HCT116 (cell line): ENCODE measurements at regions of chr14 and their contacts with region 1.

Region 1: DNA sequence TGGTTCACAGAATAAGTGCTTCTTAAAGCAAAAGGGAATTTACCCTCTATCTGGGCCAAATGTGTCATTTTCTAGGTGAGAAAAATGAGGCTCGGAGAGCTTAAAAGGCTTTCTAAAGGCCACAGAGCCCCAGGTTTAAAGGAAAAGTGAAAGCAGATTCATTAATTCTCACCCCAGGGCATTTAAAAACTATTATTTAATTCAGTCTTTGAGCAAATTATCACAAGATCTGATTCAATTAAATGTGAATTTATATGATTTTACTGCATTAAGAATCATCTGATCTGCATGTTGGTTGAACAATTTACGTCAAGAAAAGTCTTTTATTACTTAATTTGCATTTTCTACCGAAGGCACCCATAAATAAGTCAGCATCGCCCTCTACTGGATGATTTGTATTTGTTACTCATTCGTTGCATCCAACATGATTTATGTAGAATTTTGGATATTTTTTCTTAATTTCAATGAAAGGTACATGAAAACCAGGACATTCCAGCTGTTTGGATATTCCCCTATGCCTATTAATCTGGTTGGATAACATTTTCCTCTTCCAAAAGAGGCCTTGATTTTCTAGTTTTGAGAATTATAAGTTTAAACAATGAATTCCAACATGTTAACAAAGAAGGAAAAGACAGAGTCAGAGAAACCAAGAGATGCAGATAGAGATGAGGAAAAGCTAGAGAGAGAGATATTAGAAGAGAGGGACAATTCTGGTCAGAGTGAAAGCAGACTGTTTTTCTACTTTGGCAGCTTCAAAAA is 19.1 kb upstream of the DHRS7 start:
- DNase-seq: peak; percentile 61
- ATAC-seq: peak; percentile 64
- H3K4me3 ChIP-seq: peak overlapping the region; percentile 28 to 36
- H3K27ac ChIP-seq: no peak overlapping the region
- H3K4me1 ChIP-seq: peaks cover 0 to 12% of the 10 kb centered on the region in 2 experiments; a peak in 2 of 4 replicates
- H3K27me3 ChIP-seq: no peaks in the 10 kb centered on the region
- CTCF ChIP-seq: peak; percentile 46 to 84 (median 83); a peak in 5 of 6 replicates
- POLR2A ChIP-seq: no peak
- RAD21 ChIP-seq: peak; percentile 92

Region 2: GRCh38 chr14:59507063-59507780 is 677.1 kb before region 1 on chr14:
- CTCF ChIA-PET with region 1: interaction called, 8 read pairs
- POLR2A ChIA-PET with region 1: no interaction called
- RAD21 ChIA-PET with region 1: no interaction called
- intact Hi-C with region 1: loop called (anchors 5 kb)
- DNase-seq: peak; percentile 42
- ATAC-seq: peak; percentile 96
- H3K4me3 ChIP-seq: no peak overlapping the region
- H3K27ac ChIP-seq: no peak overlapping the region
- H3K4me1 ChIP-seq: no peaks in the 10 kb centered on the region
- H3K27me3 ChIP-seq: no peaks in the 10 kb centered on the region
- CTCF ChIP-seq: peak; percentile 62 to 99 (median 94)
- POLR2A ChIP-seq: no peak
- RAD21 ChIP-seq: peak; percentile 61

Region 3: GRCh38 chr14:59632381-59632780 is 551.9 kb before region 1 on chr14:
- CTCF ChIA-PET with region 1: interaction called, 10 read pairs
- POLR2A ChIA-PET with region 1: no interaction called
- RAD21 ChIA-PET with region 1: no interaction called
- intact Hi-C with region 1: loop called (anchors 1 kb)
- DNase-seq: peak; percentile 33
- ATAC-seq: peak; percentile 80
- H3K4me3 ChIP-seq: no peak overlapping the region
- H3K27ac ChIP-seq: no peak overlapping the region
- H3K4me1 ChIP-seq: no peaks in the 10 kb centered on the region
- H3K27me3 ChIP-seq: no peaks in the 10 kb centered on the region
- CTCF ChIP-seq: peak; percentile 69 to 75 (median 71)
- POLR2A ChIP-seq: no peak
- RAD21 ChIP-seq: peak; percentile 70

Region 4: DNA sequence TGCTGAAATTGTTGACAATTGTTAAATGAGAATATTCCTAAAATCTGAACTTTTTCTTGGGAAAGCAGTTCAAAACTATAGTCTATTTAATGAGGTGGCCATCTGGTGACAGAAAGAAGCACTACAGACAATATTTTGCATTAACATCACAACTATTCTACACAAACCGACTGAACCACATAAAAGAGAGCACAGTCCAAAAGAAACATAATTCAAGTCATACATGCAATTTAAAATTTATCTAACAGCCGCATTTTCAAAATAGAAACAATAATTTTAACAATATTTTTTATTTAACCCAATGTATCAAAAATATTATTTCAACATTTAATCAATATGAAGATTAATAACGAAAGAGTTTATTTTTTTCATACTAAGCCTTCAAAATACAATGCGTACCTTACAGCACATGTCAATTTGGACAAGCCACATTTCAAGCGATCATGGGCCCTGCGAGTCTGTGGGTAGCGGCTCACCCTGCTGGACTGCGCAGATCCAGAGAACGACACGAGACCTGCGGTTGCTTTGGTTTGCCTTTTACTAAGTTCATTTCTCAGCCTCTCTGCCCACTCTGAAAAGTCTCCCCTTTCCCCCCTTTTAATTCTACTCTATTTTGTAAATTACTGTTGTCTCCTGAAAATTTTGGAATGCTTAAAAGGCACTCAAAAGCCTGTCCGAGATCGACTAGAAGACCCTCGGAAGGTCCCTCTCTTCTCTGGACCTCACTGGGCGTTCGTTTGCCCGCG is 265.3 kb before region 1 on chr14:
- CTCF ChIA-PET with region 1: interaction called, 3 read pairs
- POLR2A ChIA-PET with region 1: no interaction called
- RAD21 ChIA-PET with region 1: no interaction called
- intact Hi-C with region 1: loop called (anchors 2 kb)
- DNase-seq: peak; percentile 16
- ATAC-seq: no peak; the same call in 1 of the 2 replicates
- H3K4me3 ChIP-seq: no peak overlapping the region
- H3K27ac ChIP-seq: no peak overlapping the region
- H3K4me1 ChIP-seq: no peaks in the 10 kb centered on the region
- H3K27me3 ChIP-seq: no peaks in the 10 kb centered on the region
- CTCF ChIP-seq: peak; percentile 34 to 55 (median 37); a peak in 4 of 6 replicates
- POLR2A ChIP-seq: no peak
- RAD21 ChIP-seq: peak; percentile 45

Region 5: DNA sequence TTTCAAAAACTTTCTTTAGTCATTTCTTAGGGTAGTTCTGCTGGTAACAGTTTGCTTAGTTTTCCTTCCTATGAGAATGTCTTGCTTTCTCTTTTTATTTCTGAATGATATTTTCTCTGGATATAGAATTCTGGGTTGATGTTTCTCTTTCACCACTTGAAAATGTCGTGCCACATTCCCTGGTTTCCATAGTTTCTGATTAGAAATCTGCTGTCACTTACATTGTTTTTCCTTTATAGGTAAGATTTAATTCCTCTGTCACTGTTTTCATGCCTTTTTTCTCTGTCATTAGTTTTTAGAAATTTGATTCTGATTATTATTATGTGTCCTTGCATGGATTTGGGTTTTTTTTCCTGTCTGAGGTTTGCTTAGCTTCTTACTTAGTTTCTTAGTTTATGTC is 169.9 kb before region 1 on chr14:
- CTCF ChIA-PET with region 1: no interaction called
- POLR2A ChIA-PET with region 1: no interaction called
- RAD21 ChIA-PET with region 1: no interaction called
- intact Hi-C with region 1: no loop called
- DNase-seq: no peak
- ATAC-seq: no peak
- H3K4me3 ChIP-seq: no peak overlapping the region
- H3K27ac ChIP-seq: no peak overlapping the region
- H3K4me1 ChIP-seq: no peaks in the 10 kb centered on the region
- H3K27me3 ChIP-seq: no peaks in the 10 kb centered on the region
- CTCF ChIP-seq: no peak
- POLR2A ChIP-seq: no peak
- RAD21 ChIP-seq: no peak

Region 6: GRCh38 chr14:60064491-60065072 is 119.7 kb before region 1 on chr14:
- CTCF ChIA-PET with region 1: interaction called, 50 read pairs
- POLR2A ChIA-PET with region 1: no interaction called
- RAD21 ChIA-PET with region 1: no interaction called
- intact Hi-C with region 1: loop called (anchors 1 kb)
- DNase-seq: peak; percentile 12
- ATAC-seq: no peak; the same call in 1 of the 2 replicates
- H3K4me3 ChIP-seq: no peak overlapping the region
- H3K27ac ChIP-seq: no peak overlapping the region
- H3K4me1 ChIP-seq: peaks cover 4 to 10% of the 10 kb centered on the region in 2 experiments; a peak in 2 of 4 replicates
- H3K27me3 ChIP-seq: no peaks in the 10 kb centered on the region
- CTCF ChIP-seq: peak; percentile 27 to 67 (median 46); a peak in 4 of 6 replicates
- POLR2A ChIP-seq: no peak
- RAD21 ChIP-seq: peak; percentile 74

Region 7: DNA sequence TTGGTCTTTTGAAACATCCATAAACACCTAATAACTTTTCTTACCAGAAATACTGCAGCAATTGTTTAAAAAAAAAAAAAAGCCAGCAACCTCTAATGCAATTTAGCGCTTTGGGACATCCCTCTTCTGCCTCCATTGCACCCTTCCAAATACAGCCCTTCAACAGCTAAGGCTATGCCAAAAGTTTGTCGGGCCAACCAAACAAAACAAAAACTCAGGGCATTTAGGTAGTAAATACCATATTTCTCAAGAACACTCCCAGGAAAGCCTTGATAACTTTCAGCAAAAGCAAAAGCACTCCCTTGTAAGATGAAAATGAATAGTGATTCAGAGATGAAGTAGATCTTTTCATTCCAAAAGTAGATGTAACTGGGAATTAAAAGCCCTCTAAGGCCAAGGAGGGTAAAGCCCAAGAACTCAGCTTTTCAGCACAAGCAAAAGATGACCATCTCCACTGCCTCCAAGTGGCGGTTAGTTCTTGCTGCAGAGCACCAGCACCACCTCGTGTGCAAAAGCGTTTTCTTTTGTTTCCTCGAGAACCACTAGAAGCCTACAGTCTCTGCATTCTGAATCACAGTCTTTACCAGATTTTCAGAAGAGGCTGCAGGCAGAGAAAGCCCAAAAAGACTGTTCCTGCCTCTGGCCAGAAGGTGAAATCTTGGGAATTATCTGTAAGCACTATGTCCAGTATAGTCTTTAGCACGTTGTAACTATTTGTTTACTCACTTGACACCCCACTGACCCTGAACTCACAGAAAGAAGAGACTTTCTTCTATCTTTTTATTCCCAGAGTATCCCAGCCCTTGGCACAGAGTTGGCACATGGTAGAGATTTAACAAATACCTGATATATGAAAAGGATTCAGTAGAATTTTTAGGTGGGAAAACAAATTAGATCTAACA is 377.8 kb after region 1 on chr14:
- CTCF ChIA-PET with region 1: interaction called, 13 read pairs
- POLR2A ChIA-PET with region 1: no interaction called
- RAD21 ChIA-PET with region 1: interaction called in 1 of 2 experiments, 3 read pairs
- intact Hi-C with region 1: loop called (anchors 2 kb)
- DNase-seq: peak; percentile 81
- ATAC-seq: peak; percentile 97
- H3K4me3 ChIP-seq: no peak overlapping the region
- H3K27ac ChIP-seq: no peak overlapping the region
- H3K4me1 ChIP-seq: peaks cover 0 to 4% of the 10 kb centered on the region in 2 experiments; a peak in 1 of 4 replicates
- H3K27me3 ChIP-seq: no peaks in the 10 kb centered on the region
- CTCF ChIP-seq: peak; percentile 80 to 96 (median 89)
- POLR2A ChIP-seq: no peak
- RAD21 ChIP-seq: peak; percentile 91